ENCODE measurements at regions of chr11 and their contacts with region 1.

Region 1: GRCh38 chr11:8813658-8814057 is 97.3 kb upstream of the AKIP1 start:
- DNase-seq: peak; percentile 83
- ATAC-seq: peak; percentile 78
- H3K4me3 ChIP-seq: no peak overlapping the region
- H3K27ac ChIP-seq: no peak overlapping the region
- H3K4me1 ChIP-seq: peaks cover 43% of the 10 kb centered on the region
- H3K27me3 ChIP-seq: no peaks in the 10 kb centered on the region
- CTCF ChIP-seq: peak; percentile 88
- EP300 ChIP-seq: no peak
- POLR2A ChIP-seq: no peak
- RAD21 ChIP-seq: peak; percentile 72

Region 2: DNA sequence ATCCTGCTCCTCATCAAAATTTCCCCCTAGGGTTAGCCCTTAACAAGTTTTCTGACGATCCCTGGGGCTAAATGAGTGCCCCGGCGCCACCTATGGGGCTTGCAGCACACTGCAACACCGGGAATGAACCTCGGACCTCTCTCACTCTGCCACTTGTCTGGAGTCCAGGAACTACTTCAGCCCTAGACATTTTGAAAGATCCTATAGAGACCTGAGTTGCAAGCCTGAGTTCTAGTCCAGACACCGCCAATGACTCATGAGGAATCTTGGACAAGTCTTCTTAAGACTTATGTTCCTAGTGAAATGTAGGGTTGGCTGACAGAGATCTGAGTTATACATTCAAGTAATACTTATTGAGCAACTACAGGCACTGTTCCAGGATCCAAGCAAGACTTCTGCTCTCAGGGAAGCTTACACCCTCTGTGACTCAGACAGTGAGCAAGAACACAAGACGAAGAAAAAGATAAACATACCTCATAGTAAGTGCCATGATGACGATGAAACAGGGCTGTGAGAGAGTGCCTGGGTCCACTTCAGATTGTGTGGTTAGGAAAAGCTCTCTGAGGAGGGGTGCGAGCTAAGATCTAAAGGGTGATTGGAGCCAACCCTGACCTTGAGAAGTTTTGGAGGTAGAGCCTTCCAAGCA is 209.5 kb before region 1 on chr11:
- CTCF ChIA-PET with region 1: no interaction called
- POLR2A ChIA-PET with region 1: no interaction called
- in situ Hi-C with region 1: no loop called
- intact Hi-C with region 1: loop called (anchors 10 kb)
- DNase-seq: peak; percentile 46
- ATAC-seq: peak; percentile 91
- H3K4me3 ChIP-seq: no peak overlapping the region
- H3K27ac ChIP-seq: no peak overlapping the region
- H3K4me1 ChIP-seq: peaks cover 6% of the 10 kb centered on the region
- H3K27me3 ChIP-seq: no peaks in the 10 kb centered on the region; a peak in 1 of 5 replicates
- CTCF ChIP-seq: peak; percentile 81
- EP300 ChIP-seq: no peak
- POLR2A ChIP-seq: no peak
- RAD21 ChIP-seq: peak; percentile 35; the same call in 1 of the 2 replicates

Region 3: DNA sequence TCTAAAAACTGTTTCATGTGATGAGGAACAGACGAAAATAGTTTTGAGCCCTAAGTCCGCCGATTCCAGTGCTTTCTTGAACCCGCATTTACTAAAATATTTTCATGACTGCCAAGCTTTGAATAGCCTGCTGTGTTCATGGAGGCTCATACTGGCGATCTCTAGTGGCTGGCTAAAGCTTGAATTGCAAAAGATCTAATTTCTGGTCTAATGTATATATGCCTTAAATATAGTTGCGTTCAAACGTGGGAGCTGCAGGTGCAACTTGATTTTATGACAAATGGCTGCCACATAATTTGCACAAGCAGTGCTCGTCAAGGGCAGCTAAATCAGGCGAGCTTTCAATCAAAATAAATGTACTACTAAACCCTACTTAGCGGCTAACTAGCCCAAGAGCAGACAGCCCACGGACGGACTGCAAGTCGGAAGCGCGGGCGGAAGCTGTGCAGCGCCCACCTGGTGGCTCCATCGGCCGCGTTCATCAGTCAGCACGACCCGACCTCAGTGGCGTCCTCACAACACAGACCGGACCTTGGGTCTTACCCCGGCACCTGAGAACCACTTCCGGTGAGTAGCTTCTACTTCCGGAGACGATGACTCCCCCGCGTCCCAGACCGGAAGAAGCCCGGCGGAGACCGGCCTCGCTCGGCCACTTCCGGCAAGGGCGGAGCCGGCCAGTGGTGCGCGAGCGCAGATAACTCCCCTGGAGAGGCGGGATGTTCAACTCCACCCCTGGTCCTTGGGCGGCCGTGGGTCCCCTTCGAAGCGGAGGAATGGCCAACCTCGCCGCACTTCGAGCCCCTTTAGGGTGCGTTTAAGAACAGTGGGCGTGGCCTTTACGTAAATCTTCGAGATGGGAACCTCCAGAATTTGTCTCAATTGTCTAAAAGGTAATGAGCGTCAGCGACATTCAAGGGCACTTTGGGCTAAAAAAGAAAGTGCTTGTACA is 125.0 kb before region 1 on chr11:
- CTCF ChIA-PET with region 1: interaction called, 3 read pairs
- POLR2A ChIA-PET with region 1: interaction called, 33 read pairs
- in situ Hi-C with region 1: no loop called
- intact Hi-C with region 1: loop called (anchors 2 kb)
- DNase-seq: peak; percentile 96
- ATAC-seq: peak; percentile 87
- H3K4me3 ChIP-seq: peak overlapping the region; percentile 42 to 64 (median 48); a peak in 5 of 6 replicates
- H3K27ac ChIP-seq: peak overlapping the region; percentile 71
- H3K4me1 ChIP-seq: peaks cover 60% of the 10 kb centered on the region
- H3K27me3 ChIP-seq: no peaks in the 10 kb centered on the region
- CTCF ChIP-seq: peak; percentile 84
- EP300 ChIP-seq: peak in 1 of 2 experiments; percentile 56; a peak in 1 of 4 replicates
- POLR2A ChIP-seq: peak; percentile 77 to 96
- RAD21 ChIP-seq: peak; percentile 78; the same call in 1 of the 2 replicates

Region 4: DNA sequence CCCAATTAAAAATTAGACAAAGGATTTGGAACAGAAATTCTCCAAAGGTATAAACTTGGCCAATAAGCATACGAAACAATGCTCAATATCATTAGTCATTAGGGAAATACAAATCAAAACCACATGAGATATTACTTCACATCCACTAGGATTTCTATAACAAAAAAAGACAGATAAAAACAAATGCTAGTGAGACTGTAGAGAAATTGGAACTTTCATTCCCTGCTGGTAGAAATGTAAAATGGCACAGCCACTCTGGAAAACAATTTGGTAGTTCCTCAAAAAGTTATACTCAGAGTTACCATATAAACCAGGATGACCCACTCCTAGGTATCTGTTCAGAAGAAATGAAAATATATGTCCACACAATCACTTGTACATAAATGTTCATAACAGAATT is 59.4 kb before region 1 on chr11:
- CTCF ChIA-PET with region 1: no interaction called
- POLR2A ChIA-PET with region 1: no interaction called
- in situ Hi-C with region 1: no loop called
- intact Hi-C with region 1: loop called (anchors 2 kb)
- DNase-seq: no peak
- ATAC-seq: no peak
- H3K4me3 ChIP-seq: no peak overlapping the region
- H3K27ac ChIP-seq: no peak overlapping the region
- H3K4me1 ChIP-seq: peaks cover 24% of the 10 kb centered on the region
- H3K27me3 ChIP-seq: no peaks in the 10 kb centered on the region
- CTCF ChIP-seq: no peak
- EP300 ChIP-seq: no peak
- POLR2A ChIP-seq: no peak
- RAD21 ChIP-seq: no peak

Region 5: GRCh38 chr11:8858808-8859207 is 45.1 kb after region 1 on chr11:
- CTCF ChIA-PET with region 1: no interaction called
- POLR2A ChIA-PET with region 1: no interaction called
- in situ Hi-C with region 1: no loop called
- intact Hi-C with region 1: no loop called
- DNase-seq: no peak
- ATAC-seq: no peak
- H3K4me3 ChIP-seq: no peak overlapping the region
- H3K27ac ChIP-seq: no peak overlapping the region
- H3K4me1 ChIP-seq: peaks cover 6% of the 10 kb centered on the region; the same call in 1 of the 2 replicates
- H3K27me3 ChIP-seq: no peaks in the 10 kb centered on the region; a peak in 1 of 5 replicates
- CTCF ChIP-seq: no peak
- EP300 ChIP-seq: no peak
- POLR2A ChIP-seq: no peak
- RAD21 ChIP-seq: no peak

Region 6: GRCh38 chr11:8911029-8911826 is 97.6 kb after region 1 on chr11 and contains the start of gene AKIP1:
- CTCF ChIA-PET with region 1: no interaction called
- POLR2A ChIA-PET with region 1: interaction called, 5 read pairs
- in situ Hi-C with region 1: no loop called
- intact Hi-C with region 1: loop called (anchors 5 kb)
- DNase-seq: peak; percentile 93
- ATAC-seq: peak; percentile 94
- H3K4me3 ChIP-seq: peak within 1 kb of the TSS; percentile 82 to 92 (median 91)
- H3K27ac ChIP-seq: peak within 1 kb of the TSS; percentile 81
- H3K4me1 ChIP-seq: peaks cover 44% of the 10 kb centered on the region
- H3K27me3 ChIP-seq: no peaks in the 10 kb centered on the region; a peak in 1 of 5 replicates
- CTCF ChIP-seq: peak; percentile 10; the same call in 1 of the 2 replicates
- EP300 ChIP-seq: no peak
- POLR2A ChIP-seq: peak; percentile 27 to 82; a peak in 2 of 4 replicates
- RAD21 ChIP-seq: no peak
- total RNA-seq, gene AKIP1: 20.3 and 21.6 TPM in 2 replicates

Measured in HepG2 (cell line).